SK-N-SH (cell line): ENCODE measurements at regions of chr17 and their contacts with region 1.

Region 1: GRCh38 chr17:78241277-78242023 is 10.0 kb downstream of the TMEM235 start:
- DNase-seq: peak; percentile 79
- H3K4me3 ChIP-seq: no peak overlapping the region
- H3K27ac ChIP-seq: no peak overlapping the region; a peak in 1 of 4 replicates
- H3K4me1 ChIP-seq: peaks cover 0 to 26% of the 10 kb centered on the region in 2 experiments; a peak in 1 of 4 replicates
- H3K27me3 ChIP-seq: no peaks in the 10 kb centered on the region
- CTCF ChIP-seq: no peak
- EP300 ChIP-seq: no peak
- RAD21 ChIP-seq: no peak

Region 2: DNA sequence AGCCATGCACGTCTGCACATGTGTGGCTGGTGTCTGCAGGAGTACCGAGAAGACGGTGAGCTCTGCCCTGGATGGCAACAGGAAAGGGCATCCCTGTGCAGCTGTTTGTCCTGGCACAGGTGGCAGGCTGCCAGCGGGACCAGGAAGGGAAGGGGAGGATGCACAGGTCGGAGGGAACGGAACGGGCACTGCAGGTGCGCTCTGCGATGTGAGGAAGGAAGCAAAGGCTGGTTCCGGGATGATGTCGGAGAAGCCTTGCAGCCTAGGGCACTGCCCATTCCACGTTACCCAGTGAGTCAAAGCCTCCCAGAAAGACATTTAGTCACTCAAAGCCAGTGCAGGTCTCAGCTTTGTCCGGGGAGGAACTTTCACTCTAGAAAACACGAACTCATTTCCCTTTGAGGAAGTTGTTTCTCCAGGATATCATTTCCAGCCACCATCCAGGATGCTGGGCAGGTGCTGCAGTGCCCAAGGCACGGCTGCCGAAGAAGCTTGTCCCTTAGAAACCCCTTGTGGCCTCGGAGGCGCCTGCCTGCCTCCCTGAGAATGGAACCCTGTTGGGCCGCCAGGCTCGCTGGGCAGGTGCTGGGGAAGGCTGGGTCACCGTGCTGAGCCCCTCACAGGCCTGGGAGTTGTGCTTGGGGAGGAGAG is 14.6 kb before region 1 on chr17:
- CTCF ChIA-PET with region 1: interaction called, 196 read pairs
- POLR2A ChIA-PET with region 1: interaction called, 16 read pairs
- DNase-seq: no peak
- H3K4me3 ChIP-seq: no peak overlapping the region
- H3K27ac ChIP-seq: peak overlapping the region in 1 of 2 experiments; percentile 98; a peak in 2 of 4 replicates
- H3K4me1 ChIP-seq: peaks cover 8 to 54% of the 10 kb centered on the region in 2 experiments; a peak in 3 of 4 replicates
- H3K27me3 ChIP-seq: peaks cover 11% of the 10 kb centered on the region
- CTCF ChIP-seq: no peak
- EP300 ChIP-seq: no peak
- RAD21 ChIP-seq: no peak